ENCODE measurements at regions of chr2 and their contacts with region 1.

Region 1: DNA sequence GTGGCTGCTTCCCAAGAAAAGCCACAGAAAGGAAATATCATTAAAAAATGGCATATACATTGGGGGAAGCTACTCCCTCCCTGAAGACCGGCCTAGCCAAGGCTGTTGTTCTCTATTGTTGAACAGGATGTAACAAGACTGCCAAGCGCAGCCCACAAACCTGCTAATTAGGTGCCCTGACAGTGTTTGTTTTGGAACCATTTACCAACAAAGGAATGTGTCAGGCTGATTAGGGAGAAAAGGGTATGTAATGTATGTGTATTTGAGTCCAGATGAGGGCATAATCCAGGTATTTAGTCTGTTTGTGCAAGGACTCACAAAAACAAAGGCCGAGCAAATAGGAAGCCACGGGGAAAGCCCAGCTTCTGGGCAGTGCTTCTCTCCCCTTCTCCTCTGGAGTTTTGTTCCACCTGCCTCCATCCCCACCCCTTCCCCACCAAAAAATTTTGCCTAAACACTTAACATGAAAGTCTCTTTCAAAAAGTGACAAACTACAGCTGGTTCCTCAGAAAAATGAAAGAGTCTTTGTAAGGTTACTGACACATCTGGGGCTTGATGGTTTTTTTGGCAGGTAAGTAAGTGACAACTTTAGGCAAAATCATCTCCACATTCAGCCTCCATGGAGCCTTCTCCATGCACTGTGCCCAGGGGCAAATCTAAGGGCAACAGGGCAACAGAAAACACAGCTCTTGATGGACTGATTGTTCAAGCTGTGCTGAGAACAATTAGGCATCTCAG is 78.3 kb upstream of the FZD5 start:
- DNase-seq: peak; percentile 72 to 86
- H3K4me3 ChIP-seq: no peak overlapping the region
- H3K4me3 Mint-ChIP-seq: no peak overlapping the region
- H3K27ac Mint-ChIP-seq: peak overlapping the region; percentile 49
- H3K4me1 ChIP-seq: peaks cover 52% of the 10 kb centered on the region
- H3K4me1 Mint-ChIP-seq: peaks cover 42% of the 10 kb centered on the region
- H3K27me3 ChIP-seq: no peaks in the 10 kb centered on the region
- H3K27me3 Mint-ChIP-seq: no peaks in the 10 kb centered on the region
- CTCF ChIP-seq: no peak

Region 2: GRCh38 chr2:207655000-207655399 is 193.0 kb before region 1 on chr2:
- CTCF ChIA-PET with region 1: no interaction called
- POLR2A ChIA-PET with region 1: no interaction called
- intact Hi-C with region 1: no loop called
- DNase-seq: peak in 1 of 2 experiments; percentile 17
- H3K4me3 ChIP-seq: no peak overlapping the region
- H3K4me3 Mint-ChIP-seq: no peak overlapping the region
- H3K27ac Mint-ChIP-seq: no peak overlapping the region
- H3K4me1 ChIP-seq: no peaks in the 10 kb centered on the region
- H3K4me1 Mint-ChIP-seq: peaks cover 6% of the 10 kb centered on the region
- H3K27me3 ChIP-seq: no peaks in the 10 kb centered on the region
- H3K27me3 Mint-ChIP-seq: no peaks in the 10 kb centered on the region
- CTCF ChIP-seq: no peak

Region 3: GRCh38 chr2:207769597-207770486 is 78.1 kb before region 1 on chr2 and contains the start of gene FZD5:
- CTCF ChIA-PET with region 1: interaction called, 4 read pairs
- POLR2A ChIA-PET with region 1: interaction called, 4 read pairs
- intact Hi-C with region 1: loop called (anchors 1 kb)
- DNase-seq: peak; percentile 99 to 100
- H3K4me3 ChIP-seq: peak within 1 kb of the TSS; percentile 81
- H3K4me3 Mint-ChIP-seq: peak within 1 kb of the TSS; percentile 96
- H3K27ac Mint-ChIP-seq: peak within 1 kb of the TSS; percentile 88
- H3K4me1 ChIP-seq: peaks cover 60% of the 10 kb centered on the region
- H3K4me1 Mint-ChIP-seq: peaks cover 48% of the 10 kb centered on the region
- H3K27me3 ChIP-seq: no peaks in the 10 kb centered on the region
- H3K27me3 Mint-ChIP-seq: no peaks in the 10 kb centered on the region
- CTCF ChIP-seq: peak; percentile 64 to 68
- total RNA-seq, gene FZD5: 59.1 and 61.4 TPM in 2 replicates

Region 4: DNA sequence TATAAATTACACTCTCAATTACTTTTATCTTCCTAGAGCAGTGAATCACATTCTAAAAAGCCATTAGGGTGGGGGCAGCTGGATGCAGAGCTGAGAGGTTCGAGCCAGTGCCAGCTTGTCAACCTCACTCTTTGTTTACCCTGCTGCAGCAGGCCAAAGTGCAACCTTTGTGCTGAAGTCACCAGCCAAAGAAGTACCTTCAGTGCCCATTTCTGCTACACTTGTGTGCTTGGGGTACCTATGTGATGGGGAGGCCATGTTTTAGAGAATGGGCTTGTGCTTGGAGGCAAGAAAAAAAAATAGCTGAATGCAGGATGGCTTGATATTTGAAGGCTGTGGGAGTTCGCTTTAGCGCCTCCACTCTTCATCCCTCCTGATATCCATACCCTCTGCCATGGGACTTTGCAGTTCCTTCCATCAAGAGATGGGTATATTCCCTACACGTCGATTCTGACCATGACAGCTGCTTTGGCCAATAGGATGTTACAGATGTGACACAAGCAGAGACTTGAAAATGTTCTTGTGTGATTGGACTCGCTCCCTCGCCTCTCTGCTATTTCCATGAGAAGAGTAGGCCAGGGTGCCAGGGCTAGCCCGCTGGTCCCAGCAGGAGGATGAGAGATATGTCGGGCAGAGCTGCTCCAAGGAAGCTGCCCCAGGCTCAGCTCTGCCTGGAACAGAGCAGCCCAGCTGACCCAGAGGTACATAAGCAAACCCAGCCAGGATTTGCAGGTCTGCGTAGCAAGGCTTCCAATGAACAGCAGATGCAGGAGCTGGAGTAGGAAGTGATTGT is 65.5 kb before region 1 on chr2:
- CTCF ChIA-PET with region 1: no interaction called
- POLR2A ChIA-PET with region 1: no interaction called
- intact Hi-C with region 1: no loop called
- DNase-seq: no peak
- H3K4me3 ChIP-seq: no peak overlapping the region
- H3K4me3 Mint-ChIP-seq: no peak overlapping the region
- H3K27ac Mint-ChIP-seq: peak overlapping the region; percentile 42
- H3K4me1 ChIP-seq: peaks cover 65% of the 10 kb centered on the region
- H3K4me1 Mint-ChIP-seq: peaks cover 53% of the 10 kb centered on the region
- H3K27me3 ChIP-seq: no peaks in the 10 kb centered on the region
- H3K27me3 Mint-ChIP-seq: no peaks in the 10 kb centered on the region
- CTCF ChIP-seq: no peak

Region 5: DNA sequence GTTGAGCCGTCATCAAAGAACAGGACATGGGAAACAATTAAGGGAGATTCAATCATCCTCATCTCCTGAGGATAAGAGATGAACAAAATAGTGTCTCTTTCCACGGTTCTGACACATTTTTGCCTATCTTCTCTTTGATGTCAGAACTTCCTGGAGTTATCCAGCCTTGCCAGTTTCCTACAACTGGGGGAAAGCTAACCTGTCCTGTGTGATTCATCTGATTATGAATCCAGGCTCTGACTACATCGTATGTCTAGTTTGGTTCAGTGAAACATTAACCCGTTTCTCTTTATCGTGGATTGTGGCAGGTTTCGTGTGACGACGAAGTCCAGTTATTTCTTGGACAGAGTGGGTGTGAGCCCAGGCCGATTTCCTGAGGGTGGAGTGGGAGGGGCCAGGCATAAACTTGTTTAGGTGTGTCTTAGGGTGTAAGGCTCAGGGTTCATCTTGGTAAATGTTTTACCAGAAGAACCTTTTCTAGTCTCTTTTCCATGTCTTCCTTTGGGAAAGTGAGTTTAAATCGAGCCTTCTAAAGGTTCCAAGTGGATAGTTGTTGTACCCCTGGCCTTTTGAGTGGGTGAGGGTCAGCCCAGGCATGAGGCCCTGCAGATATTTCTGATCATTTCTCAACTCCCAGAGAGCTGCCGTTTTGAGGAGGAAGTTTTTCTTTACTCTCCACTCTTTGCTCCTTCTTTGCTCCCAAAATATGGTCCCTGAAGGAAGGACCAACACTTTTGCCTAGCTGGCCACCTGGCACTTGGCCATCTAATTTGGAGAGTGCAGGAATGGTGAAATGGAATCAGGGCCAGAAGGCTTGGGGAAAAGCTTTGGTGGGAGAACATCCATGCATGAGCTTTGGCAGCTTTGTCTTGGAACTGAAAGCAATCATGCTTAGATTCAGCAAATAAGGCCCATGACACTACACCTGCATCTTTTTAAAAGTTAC is 27.9 kb before region 1 on chr2:
- CTCF ChIA-PET with region 1: no interaction called
- POLR2A ChIA-PET with region 1: no interaction called
- intact Hi-C with region 1: loop called (anchors 1 kb)
- DNase-seq: peak; percentile 92 to 96
- H3K4me3 ChIP-seq: no peak overlapping the region
- H3K4me3 Mint-ChIP-seq: peak overlapping the region; percentile 75
- H3K27ac Mint-ChIP-seq: peak overlapping the region; percentile 96
- H3K4me1 ChIP-seq: peaks cover 51% of the 10 kb centered on the region
- H3K4me1 Mint-ChIP-seq: peaks cover 20% of the 10 kb centered on the region
- H3K27me3 ChIP-seq: no peaks in the 10 kb centered on the region
- H3K27me3 Mint-ChIP-seq: no peaks in the 10 kb centered on the region
- CTCF ChIP-seq: no peak

Region 6: DNA sequence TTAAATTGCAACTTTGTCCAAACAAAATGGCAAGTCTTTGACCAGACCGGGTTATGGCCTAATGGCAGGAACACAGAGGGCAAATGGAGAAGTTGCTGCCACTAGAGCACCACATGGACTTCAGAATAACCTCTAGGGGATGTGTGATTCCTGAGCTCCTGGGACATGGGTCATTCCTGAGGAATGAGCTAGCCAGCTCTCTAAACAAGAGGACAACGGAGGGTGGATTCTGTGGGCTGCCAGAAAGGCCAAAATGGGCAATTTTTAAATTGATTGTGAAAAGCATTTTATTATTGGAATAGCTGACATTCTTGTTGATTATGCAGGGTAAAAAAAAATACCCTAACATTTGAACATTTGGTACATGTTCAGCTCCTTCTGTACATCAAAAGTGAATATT is 31.6 kb after region 1 on chr2:
- CTCF ChIA-PET with region 1: no interaction called
- POLR2A ChIA-PET with region 1: no interaction called
- intact Hi-C with region 1: no loop called
- DNase-seq: no peak
- H3K4me3 ChIP-seq: no peak overlapping the region
- H3K4me3 Mint-ChIP-seq: no peak overlapping the region
- H3K27ac Mint-ChIP-seq: peak overlapping the region; percentile 2
- H3K4me1 ChIP-seq: peaks cover 14% of the 10 kb centered on the region
- H3K4me1 Mint-ChIP-seq: no peaks in the 10 kb centered on the region
- H3K27me3 ChIP-seq: no peaks in the 10 kb centered on the region
- H3K27me3 Mint-ChIP-seq: no peaks in the 10 kb centered on the region
- CTCF ChIP-seq: peak in 1 of 2 experiments; percentile 22

Region 7: GRCh38 chr2:207896525-207897295 is 48.7 kb after region 1 on chr2:
- CTCF ChIA-PET with region 1: no interaction called
- POLR2A ChIA-PET with region 1: no interaction called
- intact Hi-C with region 1: loop called (anchors 1 kb)
- DNase-seq: peak; percentile 42 to 52
- H3K4me3 ChIP-seq: no peak overlapping the region
- H3K4me3 Mint-ChIP-seq: no peak overlapping the region
- H3K27ac Mint-ChIP-seq: no peak overlapping the region
- H3K4me1 ChIP-seq: peaks cover 35% of the 10 kb centered on the region
- H3K4me1 Mint-ChIP-seq: peaks cover 20% of the 10 kb centered on the region
- H3K27me3 ChIP-seq: no peaks in the 10 kb centered on the region
- H3K27me3 Mint-ChIP-seq: no peaks in the 10 kb centered on the region
- CTCF ChIP-seq: peak; percentile 39 to 44

Region 8: DNA sequence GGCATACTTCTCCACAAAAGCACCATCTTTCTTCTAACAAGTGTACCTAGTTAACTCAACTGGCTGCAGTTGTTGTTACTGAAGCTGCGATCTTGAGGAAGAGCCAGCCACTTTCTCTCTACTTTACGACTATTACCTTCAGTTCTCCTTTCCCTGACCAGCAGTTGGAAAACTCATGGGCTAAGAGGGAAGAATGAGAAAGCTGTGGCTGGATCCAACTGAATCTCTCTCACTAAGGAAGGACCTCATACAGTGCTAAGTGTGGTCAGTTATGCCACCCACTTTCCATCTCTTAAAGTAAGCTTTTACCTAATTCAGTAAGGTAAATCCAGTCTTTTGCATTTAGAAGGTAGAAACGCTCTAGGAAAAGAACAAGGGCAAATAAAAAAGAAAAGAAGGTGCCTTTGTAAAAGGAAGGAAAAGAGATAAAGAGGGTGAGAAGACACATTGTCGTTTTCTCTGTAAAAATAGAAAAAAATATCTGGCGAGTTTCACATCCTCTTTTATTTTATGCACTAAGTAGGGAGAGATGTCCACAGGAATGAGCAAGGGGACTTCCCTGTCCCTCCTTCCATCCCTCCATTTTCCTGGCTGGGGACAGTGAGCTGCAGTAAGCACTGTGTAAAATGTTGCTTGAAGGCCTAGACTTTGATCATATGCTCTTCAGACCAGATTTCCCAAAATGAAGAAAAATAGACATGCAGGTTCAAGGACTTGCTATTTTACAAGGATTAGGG is 103.9 kb after region 1 on chr2:
- CTCF ChIA-PET with region 1: interaction called, 4 read pairs
- POLR2A ChIA-PET with region 1: no interaction called
- intact Hi-C with region 1: loop called (anchors 2 kb)
- DNase-seq: no peak
- H3K4me3 ChIP-seq: no peak overlapping the region
- H3K4me3 Mint-ChIP-seq: no peak overlapping the region
- H3K27ac Mint-ChIP-seq: peak overlapping the region; percentile 68
- H3K4me1 ChIP-seq: peaks cover 65% of the 10 kb centered on the region
- H3K4me1 Mint-ChIP-seq: peaks cover 43% of the 10 kb centered on the region
- H3K27me3 ChIP-seq: no peaks in the 10 kb centered on the region
- H3K27me3 Mint-ChIP-seq: no peaks in the 10 kb centered on the region
- CTCF ChIP-seq: no peak

Region 9: DNA sequence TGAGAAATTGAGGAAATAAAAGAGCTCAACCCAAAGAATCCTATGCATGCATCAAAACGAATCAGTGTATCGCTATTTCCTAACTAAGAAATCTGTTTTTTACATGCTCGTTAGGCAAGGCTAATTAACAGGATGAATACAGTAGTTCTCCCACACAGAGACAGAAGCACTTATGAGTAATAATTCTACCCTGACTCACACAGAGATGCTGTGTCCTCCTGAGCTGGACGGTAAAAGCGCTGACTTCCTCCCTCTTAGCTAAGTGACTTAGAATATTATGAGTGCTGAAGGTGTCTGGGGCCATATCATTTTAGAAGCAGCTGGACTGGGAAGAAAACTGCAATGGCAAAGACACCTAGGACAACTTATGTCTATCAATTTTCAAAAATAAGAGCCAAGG is 158.9 kb after region 1 on chr2:
- CTCF ChIA-PET with region 1: no interaction called
- POLR2A ChIA-PET with region 1: no interaction called
- intact Hi-C with region 1: no loop called
- DNase-seq: no peak
- H3K4me3 ChIP-seq: no peak overlapping the region
- H3K4me3 Mint-ChIP-seq: no peak overlapping the region
- H3K27ac Mint-ChIP-seq: no peak overlapping the region
- H3K4me1 ChIP-seq: peaks cover 8% of the 10 kb centered on the region; the same call in 1 of the 2 replicates
- H3K4me1 Mint-ChIP-seq: no peaks in the 10 kb centered on the region
- H3K27me3 ChIP-seq: no peaks in the 10 kb centered on the region
- H3K27me3 Mint-ChIP-seq: no peaks in the 10 kb centered on the region
- CTCF ChIP-seq: no peak

Region 10: GRCh38 chr2:208033758-208034502 is 186.0 kb after region 1 on chr2:
- CTCF ChIA-PET with region 1: no interaction called
- POLR2A ChIA-PET with region 1: no interaction called
- intact Hi-C with region 1: loop called (anchors 5 kb)
- DNase-seq: peak; percentile 82 to 85
- H3K4me3 ChIP-seq: no peak overlapping the region
- H3K4me3 Mint-ChIP-seq: no peak overlapping the region
- H3K27ac Mint-ChIP-seq: peak overlapping the region; percentile 70
- H3K4me1 ChIP-seq: peaks cover 51% of the 10 kb centered on the region
- H3K4me1 Mint-ChIP-seq: peaks cover 39% of the 10 kb centered on the region
- H3K27me3 ChIP-seq: no peaks in the 10 kb centered on the region
- H3K27me3 Mint-ChIP-seq: no peaks in the 10 kb centered on the region
- CTCF ChIP-seq: peak; percentile 36